Keratinocyte (primary cell): ENCODE measurements at regions of chr17 and their contacts with region 1.

Region 1: GRCh38 chr17:79304884-79305283 is 230.3 kb downstream of the ENGASE start:
- DNase-seq: no peak
- H3K4me3 ChIP-seq: no peak overlapping the region
- H3K27ac ChIP-seq: no peak overlapping the region
- H3K4me1 ChIP-seq: no peaks in the 10 kb centered on the region
- H3K27me3 ChIP-seq: peaks cover 39% of the 10 kb centered on the region
- CTCF ChIP-seq: no peak

Region 2: DNA sequence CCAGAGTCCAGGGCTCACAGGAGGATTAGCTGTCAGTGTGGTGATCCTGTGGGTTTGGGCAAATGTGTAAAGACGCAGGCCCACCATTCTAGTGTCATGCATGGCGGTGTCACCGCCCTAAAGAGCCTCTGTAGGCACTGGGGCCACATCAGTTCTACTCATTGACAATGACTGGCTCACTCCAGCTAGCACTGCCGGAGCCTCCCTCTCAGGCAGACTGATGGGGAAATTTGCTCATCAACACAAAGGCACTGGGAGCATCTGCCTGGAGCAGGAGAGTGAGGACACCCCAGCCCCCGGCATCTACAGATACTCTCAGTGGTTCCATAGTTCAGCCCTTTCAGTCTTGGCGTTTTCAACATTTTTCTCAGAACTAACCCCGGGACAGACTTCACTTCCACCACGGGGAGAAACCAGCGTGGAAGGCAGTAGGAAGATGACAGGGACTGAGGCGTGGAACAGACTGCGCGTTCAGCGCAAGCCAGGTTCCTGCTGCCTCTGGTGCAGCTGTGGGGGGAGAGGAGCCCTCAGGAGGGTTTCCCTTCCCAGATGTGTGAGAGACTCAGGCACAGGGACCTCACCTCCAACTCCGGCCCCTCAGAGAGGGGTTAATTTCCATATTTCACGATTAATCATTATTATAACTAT is 49.4 kb after region 1 on chr17:
- dilution Hi-C with region 1: loop called (anchors 5 kb)
- DNase-seq: no peak
- H3K4me3 ChIP-seq: no peak overlapping the region
- H3K27ac ChIP-seq: no peak overlapping the region
- H3K4me1 ChIP-seq: no peaks in the 10 kb centered on the region
- H3K27me3 ChIP-seq: peaks cover 15% of the 10 kb centered on the region
- CTCF ChIP-seq: no peak

Region 3: GRCh38 chr17:79393358-79394202 is 88.7 kb after region 1 on chr17:
- dilution Hi-C with region 1: no loop called
- DNase-seq: peak; percentile 25
- H3K4me3 ChIP-seq: no peak overlapping the region
- H3K27ac ChIP-seq: no peak overlapping the region
- H3K4me1 ChIP-seq: no peaks in the 10 kb centered on the region
- H3K27me3 ChIP-seq: peaks cover 65% of the 10 kb centered on the region
- CTCF ChIP-seq: peak; percentile 97 to 100 (median 99)